Calu3 (cell line): ENCODE measurements at regions of chr12 and their contacts with region 1.

Region 1: DNA sequence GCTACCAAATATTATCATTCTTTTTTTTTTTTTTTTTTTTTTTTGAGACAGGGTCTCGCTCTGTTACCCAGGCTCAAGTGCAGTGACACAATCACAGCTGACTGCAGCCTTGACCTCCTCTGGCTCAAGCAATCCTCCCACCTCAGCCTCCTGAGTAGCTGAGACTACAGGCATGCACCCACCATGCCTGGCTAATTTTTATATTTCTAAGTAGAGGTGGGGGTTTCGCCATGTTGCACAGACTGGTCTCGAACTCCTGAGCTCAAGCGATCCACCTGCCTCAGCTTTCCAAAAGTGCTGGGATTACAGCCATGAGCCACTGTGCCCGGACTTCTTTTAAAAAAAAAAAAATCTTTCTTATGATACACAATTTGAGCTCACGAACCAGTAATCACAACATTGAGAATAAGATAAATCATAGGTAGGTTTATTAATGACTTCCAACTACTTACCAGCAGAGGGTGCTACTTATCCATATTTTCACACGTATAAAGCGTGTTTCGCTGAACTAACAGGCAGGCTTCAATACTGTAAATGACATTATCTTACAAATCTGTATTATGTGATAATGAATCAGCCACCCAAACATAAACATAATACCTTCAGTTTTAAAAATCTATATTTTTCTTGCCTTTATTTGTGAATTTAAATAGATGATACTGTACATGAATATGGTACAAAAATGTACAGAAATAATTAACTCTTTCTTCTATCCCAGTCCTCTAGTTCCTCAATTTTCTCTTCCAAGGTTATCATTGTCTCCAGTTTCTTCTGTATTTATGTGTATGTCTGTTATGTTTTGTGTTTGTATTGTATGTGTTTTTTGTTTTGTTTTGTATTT is 42.5 kb upstream of the BCAT1 start:
- DNase-seq: peak; percentile 8
- H3K4me3 Mint-ChIP-seq: no peak overlapping the region
- H3K27ac Mint-ChIP-seq: no peak overlapping the region
- H3K4me1 Mint-ChIP-seq: no peaks in the 10 kb centered on the region
- H3K27me3 Mint-ChIP-seq: peaks cover 34% of the 10 kb centered on the region
- CTCF ChIP-seq: peak; percentile 20

Region 2: DNA sequence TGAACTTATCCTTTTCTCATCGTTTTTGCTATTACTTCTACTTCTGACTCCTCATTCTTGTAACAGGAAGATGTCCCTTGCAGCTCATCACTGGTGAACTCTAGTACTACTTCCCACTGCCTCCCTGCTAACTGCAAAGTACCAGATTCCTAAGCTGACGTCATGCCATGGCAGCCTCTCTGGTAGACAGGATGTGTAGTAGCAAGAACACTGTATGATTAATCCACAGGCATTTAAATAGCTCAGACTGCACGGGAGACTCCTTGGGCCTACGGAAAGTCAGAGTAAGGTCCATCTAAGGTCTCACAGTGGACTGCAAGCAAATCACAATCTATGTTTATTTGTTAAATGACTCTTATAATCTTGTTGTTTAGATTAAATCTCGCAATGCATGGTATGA is 160.0 kb after region 1 on chr12:
- CTCF ChIA-PET with region 1: interaction called, 3 read pairs
- intact Hi-C with region 1: loop called (anchors 1 kb)
- DNase-seq: peak; percentile 7
- H3K4me3 Mint-ChIP-seq: no peak overlapping the region
- H3K27ac Mint-ChIP-seq: no peak overlapping the region
- H3K4me1 Mint-ChIP-seq: no peaks in the 10 kb centered on the region
- H3K27me3 Mint-ChIP-seq: no peaks in the 10 kb centered on the region
- CTCF ChIP-seq: no peak